ENCODE measurements at regions of chr2 and their contacts with region 1.

Region 1: GRCh38 chr2:133498662-133499585 is 69.3 kb downstream of the NCKAP5 start:
- DNase-seq: peak; percentile 72
- ATAC-seq: peak; percentile 75
- H3K4me3 ChIP-seq: no peak overlapping the region
- H3K27ac ChIP-seq: no peak overlapping the region
- H3K4me1 ChIP-seq: no peaks in the 10 kb centered on the region
- H3K27me3 ChIP-seq: no peaks in the 10 kb centered on the region
- CTCF ChIP-seq: peak in 1 of 3 experiments; percentile 22; a peak in 1 of 6 replicates
- EP300 ChIP-seq: peak; percentile 72 to 81; a peak in 2 of 4 replicates
- POLR2A ChIP-seq: no peak
- RAD21 ChIP-seq: no peak

Region 2: DNA sequence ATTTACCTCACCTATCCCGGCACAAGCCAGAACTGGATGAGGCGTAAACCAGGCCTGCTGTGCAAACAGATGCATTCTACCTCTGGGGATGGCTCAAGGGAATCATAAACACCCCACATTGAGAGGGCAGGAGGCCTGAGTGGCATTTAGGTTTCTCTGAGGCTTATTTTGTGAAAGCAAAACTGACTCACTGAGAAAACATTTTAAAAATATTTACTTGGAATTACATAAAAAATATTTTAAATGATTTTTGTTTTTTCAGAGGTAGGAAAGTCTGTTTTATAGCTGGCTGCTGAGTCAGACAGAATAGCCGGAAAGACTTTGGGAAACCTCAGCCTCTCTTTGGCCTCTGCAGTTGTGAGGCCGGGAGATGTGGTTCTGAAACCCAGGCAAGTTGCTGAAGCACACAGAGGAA is 174.8 kb before region 1 on chr2:
- CTCF ChIA-PET with region 1: no interaction called
- POLR2A ChIA-PET with region 1: no interaction called
- RAD21 ChIA-PET with region 1: no interaction called
- SMC1A ChIA-PET with region 1: no interaction called
- in situ Hi-C with region 1: no loop called
- intact Hi-C with region 1: no loop called
- DNase-seq: no peak
- ATAC-seq: no peak
- H3K4me3 ChIP-seq: no peak overlapping the region
- H3K27ac ChIP-seq: no peak overlapping the region
- H3K4me1 ChIP-seq: no peaks in the 10 kb centered on the region
- H3K27me3 ChIP-seq: no peaks in the 10 kb centered on the region
- CTCF ChIP-seq: no peak
- EP300 ChIP-seq: no peak
- POLR2A ChIP-seq: no peak
- RAD21 ChIP-seq: no peak

Region 3: GRCh38 chr2:133421516-133422312 is 77.2 kb before region 1 on chr2:
- CTCF ChIA-PET with region 1: interaction called, 22 read pairs
- POLR2A ChIA-PET with region 1: interaction called, 7 read pairs
- RAD21 ChIA-PET with region 1: interaction called, 28 read pairs
- SMC1A ChIA-PET with region 1: interaction called, 33 read pairs
- in situ Hi-C with region 1: no loop called
- intact Hi-C with region 1: loop called (anchors 2 kb)
- DNase-seq: peak; percentile 61
- ATAC-seq: peak; percentile 92
- H3K4me3 ChIP-seq: no peak overlapping the region
- H3K27ac ChIP-seq: no peak overlapping the region
- H3K4me1 ChIP-seq: no peaks in the 10 kb centered on the region
- H3K27me3 ChIP-seq: peaks cover 0 to 4% of the 10 kb centered on the region in 2 experiments; a peak in 1 of 4 replicates
- CTCF ChIP-seq: peak in 1 of 3 experiments; percentile 16; a peak in 1 of 6 replicates
- EP300 ChIP-seq: no peak
- POLR2A ChIP-seq: no peak
- RAD21 ChIP-seq: no peak

Region 4: GRCh38 chr2:133486771-133487191 is 12.1 kb before region 1 on chr2:
- CTCF ChIA-PET with region 1: interaction called, 4 read pairs
- POLR2A ChIA-PET with region 1: interaction called, 3 read pairs
- RAD21 ChIA-PET with region 1: interaction called, 3 read pairs
- SMC1A ChIA-PET with region 1: interaction called, 11 read pairs
- in situ Hi-C with region 1: no loop called
- intact Hi-C with region 1: no loop called
- DNase-seq: no peak
- ATAC-seq: no peak
- H3K4me3 ChIP-seq: no peak overlapping the region
- H3K27ac ChIP-seq: no peak overlapping the region
- H3K4me1 ChIP-seq: no peaks in the 10 kb centered on the region
- H3K27me3 ChIP-seq: no peaks in the 10 kb centered on the region; a peak in 1 of 4 replicates
- CTCF ChIP-seq: no peak
- EP300 ChIP-seq: no peak
- POLR2A ChIP-seq: no peak
- RAD21 ChIP-seq: no peak

Region 5: GRCh38 chr2:133511679-133512078 is 12.8 kb after region 1 on chr2:
- CTCF ChIA-PET with region 1: interaction called, 26 read pairs
- POLR2A ChIA-PET with region 1: interaction called, 18 read pairs
- RAD21 ChIA-PET with region 1: interaction called, 18 read pairs
- SMC1A ChIA-PET with region 1: interaction called, 81 read pairs
- in situ Hi-C with region 1: no loop called
- intact Hi-C with region 1: no loop called
- DNase-seq: no peak
- ATAC-seq: no peak
- H3K4me3 ChIP-seq: no peak overlapping the region
- H3K27ac ChIP-seq: no peak overlapping the region
- H3K4me1 ChIP-seq: no peaks in the 10 kb centered on the region
- H3K27me3 ChIP-seq: no peaks in the 10 kb centered on the region
- CTCF ChIP-seq: no peak
- EP300 ChIP-seq: no peak
- POLR2A ChIP-seq: no peak
- RAD21 ChIP-seq: no peak

Region 6: GRCh38 chr2:133526530-133527300 is 27.8 kb after region 1 on chr2:
- CTCF ChIA-PET with region 1: interaction called, 3 read pairs
- POLR2A ChIA-PET with region 1: no interaction called
- RAD21 ChIA-PET with region 1: interaction called, 5 read pairs
- SMC1A ChIA-PET with region 1: interaction called, 12 read pairs
- in situ Hi-C with region 1: no loop called
- intact Hi-C with region 1: no loop called
- DNase-seq: no peak
- ATAC-seq: no peak
- H3K4me3 ChIP-seq: no peak overlapping the region
- H3K27ac ChIP-seq: no peak overlapping the region
- H3K4me1 ChIP-seq: no peaks in the 10 kb centered on the region
- H3K27me3 ChIP-seq: no peaks in the 10 kb centered on the region
- CTCF ChIP-seq: no peak
- EP300 ChIP-seq: no peak
- POLR2A ChIP-seq: no peak
- RAD21 ChIP-seq: no peak

Region 7: DNA sequence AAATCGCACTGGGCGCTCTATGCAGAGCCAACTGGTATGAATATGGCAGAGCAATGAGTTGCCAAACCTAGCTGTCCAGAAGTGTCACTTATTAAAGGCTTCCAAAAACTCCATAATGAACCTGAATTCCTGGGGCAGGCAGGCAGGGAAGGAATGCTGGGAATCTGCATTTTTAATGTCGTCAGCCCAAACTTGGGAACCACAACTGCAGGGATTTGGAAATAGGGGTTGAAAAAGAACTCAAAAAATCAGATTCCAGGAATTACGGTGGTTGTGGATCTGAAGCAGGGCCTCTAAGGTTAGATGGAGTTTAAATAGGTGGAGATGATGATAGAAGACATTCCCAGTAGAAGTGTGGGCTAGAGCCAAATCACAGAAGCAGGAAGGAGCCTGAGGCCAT is 54.3 kb after region 1 on chr2:
- CTCF ChIA-PET with region 1: no interaction called
- POLR2A ChIA-PET with region 1: no interaction called
- RAD21 ChIA-PET with region 1: no interaction called
- SMC1A ChIA-PET with region 1: no interaction called
- in situ Hi-C with region 1: no loop called
- intact Hi-C with region 1: no loop called
- DNase-seq: no peak
- ATAC-seq: no peak
- H3K4me3 ChIP-seq: no peak overlapping the region
- H3K27ac ChIP-seq: no peak overlapping the region
- H3K4me1 ChIP-seq: no peaks in the 10 kb centered on the region
- H3K27me3 ChIP-seq: no peaks in the 10 kb centered on the region
- CTCF ChIP-seq: no peak
- EP300 ChIP-seq: no peak
- POLR2A ChIP-seq: no peak
- RAD21 ChIP-seq: no peak

Measured in GM12878 (cell line).